Heart right ventricle (tissue), 16 donors: ENCODE measurements at regions of chr1 and their contacts with region 1.

Region 1: GRCh38 chr1:154453574-154454352 is 48.3 kb upstream of the TDRD10 start:
- DNase-seq: no peak
- ATAC-seq: peak; percentile 53 to 84 (median 76)
- H3K4me3 ChIP-seq: no peak overlapping the region
- H3K27ac ChIP-seq: peak overlapping the region in 5 of 10 donors; percentile 10 to 77 (median 15)
- H3K4me1 ChIP-seq: peaks cover 3 to 49% (median 11%) of the 10 kb centered on the region in 9 donors
- H3K27me3 ChIP-seq: no peaks in the 10 kb centered on the region
- CTCF ChIP-seq: no peak

Region 2: DNA sequence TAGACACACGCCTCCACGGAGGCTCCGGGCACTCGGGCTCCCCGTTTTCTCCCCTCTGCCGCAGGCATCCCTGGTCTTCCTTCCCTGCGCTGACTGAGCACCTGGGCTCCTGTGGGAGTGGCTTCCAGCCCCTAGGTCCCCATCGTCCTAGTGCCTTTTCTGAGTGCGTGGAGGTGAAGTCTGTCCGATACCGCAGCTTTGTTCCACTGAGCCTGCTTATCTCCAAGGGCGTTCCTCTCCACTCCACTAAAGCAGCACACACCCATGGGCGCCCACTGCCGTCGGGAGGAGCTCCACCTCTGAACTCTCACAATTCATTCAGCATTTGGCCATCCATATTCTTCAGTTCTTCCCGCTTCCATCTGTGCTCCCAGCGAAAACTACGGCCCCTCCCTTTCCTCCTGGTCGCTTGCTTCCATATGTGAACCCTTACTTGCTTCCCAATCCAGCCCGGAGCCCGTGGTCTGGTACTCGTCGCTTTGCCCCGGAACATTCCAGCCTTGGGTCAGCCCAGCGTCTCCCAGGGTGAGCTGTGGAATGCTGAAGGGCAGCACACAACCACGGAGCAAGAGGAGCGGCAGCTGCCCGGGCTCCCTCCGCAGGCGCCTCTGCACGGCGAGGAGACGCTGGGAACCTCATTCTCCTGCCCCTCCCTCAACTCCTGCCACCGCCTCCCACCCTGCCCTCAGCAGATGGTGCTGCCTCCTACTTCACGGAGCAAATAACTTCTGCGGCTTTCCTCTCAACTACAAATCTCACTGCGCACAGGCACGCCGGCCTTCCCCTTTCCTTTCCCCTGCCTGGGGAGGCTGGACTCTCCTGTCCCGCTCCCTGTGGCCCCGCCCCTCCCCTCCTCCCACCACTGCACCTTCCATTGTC is 100.9 kb before region 1 on chr1:
- intact Hi-C with region 1: loop called in 2 of 10 experiments (anchors 10 kb)
- DNase-seq: peak; percentile 53 to 54
- ATAC-seq: peak; percentile 44 to 72 (median 66)
- H3K4me3 ChIP-seq: peak overlapping the region; percentile 29 to 56 (median 50)
- H3K27ac ChIP-seq: peak overlapping the region in 9 of 10 donors; percentile 22 to 75 (median 50)
- H3K4me1 ChIP-seq: peaks cover 4 to 28% (median 15%) of the 10 kb centered on the region in 9 donors
- H3K27me3 ChIP-seq: peaks cover 0 to 14% (median 0%) of the 10 kb centered on the region in 7 donors
- CTCF ChIP-seq: no peak

Region 3: DNA sequence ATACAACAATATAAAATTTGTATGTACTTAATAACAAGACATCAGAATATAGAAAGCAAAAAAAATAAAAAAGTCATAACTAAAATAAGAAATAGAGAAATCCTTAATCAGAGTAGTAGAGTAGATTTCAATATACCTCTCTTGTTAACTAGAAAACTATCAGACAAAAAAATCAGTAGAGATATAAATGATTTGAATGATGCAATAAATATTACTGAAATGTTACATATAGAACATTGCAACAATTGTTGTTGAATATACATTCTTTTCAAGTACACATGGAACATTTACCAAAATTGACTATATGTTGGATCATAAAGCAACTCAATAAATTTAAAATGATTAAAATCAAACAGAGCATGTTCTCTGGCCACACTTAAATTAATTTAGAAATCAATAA is 186.1 kb after region 1 on chr1:
- intact Hi-C with region 1: no loop called
- DNase-seq: no peak
- ATAC-seq: no peak
- H3K4me3 ChIP-seq: no peak overlapping the region
- H3K27ac ChIP-seq: no peak overlapping the region
- H3K4me1 ChIP-seq: no peaks in the 10 kb centered on the region
- H3K27me3 ChIP-seq: peaks cover 0 to 27% (median 9%) of the 10 kb centered on the region in 7 donors
- CTCF ChIP-seq: no peak

Region 4: DNA sequence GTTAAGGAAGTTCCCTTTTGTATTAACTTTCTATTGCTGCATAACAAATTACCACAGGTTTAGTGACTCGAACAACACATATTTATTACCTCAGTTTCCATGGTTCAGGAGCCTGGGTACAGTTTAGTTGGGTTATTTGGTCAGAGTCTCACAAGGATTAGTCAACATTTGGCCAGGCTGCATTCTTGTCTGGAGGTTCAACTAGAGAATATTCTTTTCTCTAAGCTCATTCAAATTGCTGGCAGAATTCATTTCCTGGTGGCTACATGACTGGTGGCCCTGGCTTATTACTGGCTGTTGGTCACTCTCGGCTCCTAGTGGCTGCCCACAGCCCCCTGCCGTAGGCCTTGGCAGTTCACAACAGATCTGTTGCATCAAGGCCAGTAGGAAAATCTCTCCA is 235.3 kb after region 1 on chr1:
- intact Hi-C with region 1: no loop called
- DNase-seq: no peak
- ATAC-seq: no peak
- H3K4me3 ChIP-seq: no peak overlapping the region
- H3K27ac ChIP-seq: no peak overlapping the region
- H3K4me1 ChIP-seq: no peaks in the 10 kb centered on the region
- H3K27me3 ChIP-seq: peaks cover 0 to 4% (median 0%) of the 10 kb centered on the region in 7 donors
- CTCF ChIP-seq: no peak

Region 5: GRCh38 chr1:154884869-154885701 is 431.3 kb after region 1 on chr1:
- intact Hi-C with region 1: loop called in 1 of 10 experiments (anchors 10 kb)
- DNase-seq: no peak
- ATAC-seq: peak in 3 of 8 donors; percentile 45 to 47 (median 46)
- H3K4me3 ChIP-seq: no peak overlapping the region
- H3K27ac ChIP-seq: no peak overlapping the region
- H3K4me1 ChIP-seq: peaks cover 2 to 25% (median 14%) of the 10 kb centered on the region in 9 donors
- H3K27me3 ChIP-seq: no peaks in the 10 kb centered on the region
- CTCF ChIP-seq: no peak